HepG2 (cell line): ENCODE measurements at regions of chr16 and their contacts with region 1.

Region 1: DNA sequence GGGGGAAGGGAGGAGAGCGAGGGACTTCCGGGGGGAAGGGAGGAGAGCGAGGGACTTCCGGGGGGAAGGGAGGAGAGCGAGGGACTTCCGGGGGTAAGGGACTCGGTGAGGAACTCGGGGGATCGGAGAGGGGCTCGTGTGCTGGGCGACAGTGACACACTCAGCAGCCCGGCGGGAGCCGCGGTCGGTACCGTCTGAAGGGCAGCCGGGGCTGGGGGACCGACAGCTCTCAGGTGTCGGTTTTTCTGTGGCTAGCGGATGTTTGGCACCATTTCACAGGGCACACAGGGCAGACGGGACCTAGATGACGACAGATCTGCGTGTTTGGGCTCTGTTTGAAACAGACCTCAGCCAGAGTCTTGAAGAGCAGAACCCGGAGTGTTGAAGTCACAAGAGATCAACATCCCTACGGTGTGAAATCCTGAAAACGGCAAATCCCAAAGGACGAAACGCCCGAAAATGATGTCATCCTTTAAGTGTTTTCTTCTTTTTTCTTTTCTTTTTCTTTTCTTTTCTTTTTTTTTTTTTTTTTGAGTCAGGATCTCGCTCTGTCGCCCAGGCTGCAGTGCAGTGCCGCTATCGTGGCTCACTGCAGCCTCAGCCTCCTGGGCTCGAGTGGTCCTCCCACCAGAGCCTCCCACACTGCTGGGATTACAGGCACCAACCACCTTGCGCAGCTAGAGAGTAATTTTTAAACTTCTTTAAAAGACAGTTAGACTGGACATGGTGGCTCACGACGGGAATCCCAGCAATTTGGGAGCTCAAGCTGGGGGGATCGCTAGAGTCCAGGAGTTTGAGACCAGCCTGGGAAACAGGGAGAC is 23.9 kb downstream of the ZNF778 start:
- DNase-seq: peak; percentile 82
- ATAC-seq: peak; percentile 89
- H3K4me3 ChIP-seq: peak overlapping the region; percentile 66 to 99 (median 90)
- H3K27ac ChIP-seq: peak overlapping the region; percentile 96
- H3K4me1 ChIP-seq: peaks cover 41% of the 10 kb centered on the region
- H3K27me3 ChIP-seq: no peaks in the 10 kb centered on the region; a peak in 1 of 5 replicates
- CTCF ChIP-seq: no peak
- EP300 ChIP-seq: no peak
- POLR2A ChIP-seq: peak; percentile 98
- RAD21 ChIP-seq: peak; percentile 4; the same call in 1 of the 2 replicates

Region 2: GRCh38 chr16:89261691-89262563 is 20.5 kb after region 1 on chr16:
- CTCF ChIA-PET with region 1: no interaction called
- POLR2A ChIA-PET with region 1: interaction called, 78 read pairs
- in situ Hi-C with region 1: no loop called
- intact Hi-C with region 1: no loop called
- DNase-seq: peak; percentile 62
- ATAC-seq: peak; percentile 78
- H3K4me3 ChIP-seq: peak overlapping the region; percentile 65 to 77 (median 66)
- H3K27ac ChIP-seq: peak overlapping the region; percentile 75
- H3K4me1 ChIP-seq: peaks cover 30% of the 10 kb centered on the region
- H3K27me3 ChIP-seq: no peaks in the 10 kb centered on the region
- CTCF ChIP-seq: 0 out of 2 replicates have a peak, but pooled peaks have one; percentile 8
- EP300 ChIP-seq: no peak
- POLR2A ChIP-seq: peak; percentile 65 to 66
- RAD21 ChIP-seq: 0 out of 2 replicates have a peak, but pooled peaks have one; percentile 13